Activated CD4-positive, alpha-beta T cell treated with anti-CD3 and anti-CD28 coated beads, Interleukin-2, amount 10 ng/mL, durations not matched to agents 7 days and 5 days (primary cell): ENCODE measurements at regions of chr1 and their contacts with region 1.

Region 1: GRCh38 chr1:200473698-200474371 is 64.0 kb upstream of the ZNF281 start:
- DNase-seq: no peak
- H3K4me3 Mint-ChIP-seq: peak overlapping the region; percentile 17
- H3K27ac Mint-ChIP-seq: no peak overlapping the region
- H3K4me1 Mint-ChIP-seq: peaks cover 21% of the 10 kb centered on the region
- H3K27me3 Mint-ChIP-seq: peaks cover 15% of the 10 kb centered on the region

Region 2: DNA sequence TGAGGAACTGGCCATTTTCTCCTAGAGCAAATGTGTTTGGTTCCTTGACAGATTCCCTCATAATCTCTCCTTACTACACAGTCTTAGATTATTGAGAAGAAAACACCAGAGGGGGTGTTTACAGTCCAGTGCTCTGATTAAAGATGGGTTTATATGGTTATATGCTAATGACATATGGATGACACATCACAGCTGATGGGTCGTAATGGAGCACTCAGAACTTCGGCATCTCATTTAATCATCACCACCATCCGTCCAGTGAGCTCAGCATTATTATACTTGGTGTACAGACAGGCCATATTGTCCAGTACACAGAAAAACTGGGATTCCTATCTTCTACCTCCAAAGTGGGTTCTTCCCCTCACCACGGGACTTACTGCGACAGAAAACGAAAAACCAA is 468.7 kb before region 1 on chr1:
- CTCF ChIA-PET with region 1: no interaction called
- POLR2A ChIA-PET with region 1: interaction called, 10 read pairs
- DNase-seq: no peak
- H3K4me3 Mint-ChIP-seq: no peak overlapping the region
- H3K27ac Mint-ChIP-seq: no peak overlapping the region
- H3K4me1 Mint-ChIP-seq: no peaks in the 10 kb centered on the region
- H3K27me3 Mint-ChIP-seq: peaks cover 8% of the 10 kb centered on the region

Region 3: DNA sequence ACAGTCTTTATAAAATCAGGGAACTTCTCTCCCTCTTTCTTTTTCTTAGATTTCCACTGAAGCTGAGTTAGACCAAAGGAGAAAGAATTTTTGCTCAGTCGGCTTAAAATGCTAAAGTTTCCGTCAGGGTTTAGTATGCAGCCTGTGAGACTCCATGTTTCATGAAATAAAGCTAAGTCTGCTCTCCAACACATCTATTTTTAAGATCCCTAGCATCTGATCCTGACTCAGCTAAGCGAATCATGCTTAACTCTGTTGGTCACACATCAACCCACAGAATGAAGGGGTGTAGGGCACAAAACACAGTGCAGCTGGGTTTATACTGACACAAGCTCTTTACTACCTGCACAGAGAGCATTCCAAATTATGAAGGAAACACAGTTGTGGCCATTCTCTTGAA is 38.4 kb after region 1 on chr1:
- CTCF ChIA-PET with region 1: no interaction called
- POLR2A ChIA-PET with region 1: no interaction called
- DNase-seq: no peak
- H3K4me3 Mint-ChIP-seq: no peak overlapping the region
- H3K27ac Mint-ChIP-seq: no peak overlapping the region
- H3K4me1 Mint-ChIP-seq: peaks cover 2% of the 10 kb centered on the region
- H3K27me3 Mint-ChIP-seq: peaks cover 15% of the 10 kb centered on the region

Region 4: GRCh38 chr1:200602632-200603031 is 128.8 kb after region 1 on chr1:
- CTCF ChIA-PET with region 1: no interaction called
- POLR2A ChIA-PET with region 1: no interaction called
- DNase-seq: no peak
- H3K4me3 Mint-ChIP-seq: no peak overlapping the region
- H3K27ac Mint-ChIP-seq: no peak overlapping the region
- H3K4me1 Mint-ChIP-seq: no peaks in the 10 kb centered on the region
- H3K27me3 Mint-ChIP-seq: no peaks in the 10 kb centered on the region

Region 5: GRCh38 chr1:200669314-200670241 is 195.7 kb after region 1 on chr1 and contains the start of gene DDX59:
- CTCF ChIA-PET with region 1: no interaction called
- POLR2A ChIA-PET with region 1: no interaction called
- DNase-seq: peak; percentile 90
- H3K4me3 Mint-ChIP-seq: peak within 1 kb of the TSS; percentile 97
- H3K27ac Mint-ChIP-seq: peak within 1 kb of the TSS; percentile 97
- H3K4me1 Mint-ChIP-seq: peaks cover 37% of the 10 kb centered on the region
- H3K27me3 Mint-ChIP-seq: no peaks in the 10 kb centered on the region
- total RNA-seq, gene DDX59: 25.7 to 26.7 TPM